Calu3 (cell line): ENCODE measurements at regions of chr7 and their contacts with region 1.

Region 1: GRCh38 chr7:43647673-43648472 is 65.0 kb downstream of the STK17A start:
- DNase-seq: peak; percentile 88
- H3K4me3 Mint-ChIP-seq: peak overlapping the region; percentile 38
- H3K27ac Mint-ChIP-seq: peak overlapping the region; percentile 90
- H3K4me1 Mint-ChIP-seq: peaks cover 53% of the 10 kb centered on the region
- H3K27me3 Mint-ChIP-seq: no peaks in the 10 kb centered on the region
- CTCF ChIP-seq: no peak

Region 2: GRCh38 chr7:43484678-43485395 is 163.0 kb before region 1 on chr7:
- CTCF ChIA-PET with region 1: no interaction called
- intact Hi-C with region 1: loop called (anchors 1 kb)
- DNase-seq: no peak
- H3K4me3 Mint-ChIP-seq: no peak overlapping the region
- H3K27ac Mint-ChIP-seq: peak overlapping the region; percentile 6
- H3K4me1 Mint-ChIP-seq: peaks cover 87% of the 10 kb centered on the region
- H3K27me3 Mint-ChIP-seq: no peaks in the 10 kb centered on the region
- CTCF ChIP-seq: no peak

Region 3: DNA sequence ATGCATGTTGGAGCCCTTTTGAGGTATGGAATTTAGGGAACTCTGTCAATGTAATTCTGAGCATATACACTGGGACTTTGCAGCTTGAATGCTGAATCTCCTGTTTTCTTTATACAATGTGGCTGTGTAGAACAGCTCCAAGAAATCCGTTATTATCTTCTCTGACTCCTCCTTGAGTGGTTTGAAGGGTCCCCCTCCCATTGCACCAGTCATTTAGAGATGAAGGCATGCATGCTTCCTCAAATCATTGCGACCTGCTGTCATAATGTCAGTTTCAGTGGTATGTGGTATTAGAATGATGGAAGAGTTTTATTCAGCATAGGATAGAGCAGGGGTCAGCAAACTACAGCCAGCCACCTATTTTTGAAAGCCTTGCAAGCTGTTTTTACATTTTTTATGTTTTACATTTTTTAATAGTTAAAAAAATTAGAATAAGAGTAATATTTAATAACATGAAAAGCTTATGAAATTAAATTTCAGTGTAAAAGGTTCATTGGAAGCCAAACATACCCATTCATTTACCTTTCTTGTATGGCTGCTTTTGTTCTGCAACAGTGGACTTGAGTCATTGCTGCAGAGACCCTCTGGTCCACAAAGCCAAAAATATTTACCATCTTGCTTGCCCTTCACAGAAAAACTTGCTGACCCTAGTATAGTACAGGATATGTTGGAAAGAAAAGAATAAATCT is 56.9 kb before region 1 on chr7:
- CTCF ChIA-PET with region 1: interaction called, 8 read pairs
- intact Hi-C with region 1: loop called (anchors 2 kb)
- DNase-seq: no peak
- H3K4me3 Mint-ChIP-seq: peak overlapping the region; percentile 52
- H3K27ac Mint-ChIP-seq: peak overlapping the region; percentile 96
- H3K4me1 Mint-ChIP-seq: peaks cover 70% of the 10 kb centered on the region
- H3K27me3 Mint-ChIP-seq: no peaks in the 10 kb centered on the region
- CTCF ChIP-seq: no peak

Region 4: DNA sequence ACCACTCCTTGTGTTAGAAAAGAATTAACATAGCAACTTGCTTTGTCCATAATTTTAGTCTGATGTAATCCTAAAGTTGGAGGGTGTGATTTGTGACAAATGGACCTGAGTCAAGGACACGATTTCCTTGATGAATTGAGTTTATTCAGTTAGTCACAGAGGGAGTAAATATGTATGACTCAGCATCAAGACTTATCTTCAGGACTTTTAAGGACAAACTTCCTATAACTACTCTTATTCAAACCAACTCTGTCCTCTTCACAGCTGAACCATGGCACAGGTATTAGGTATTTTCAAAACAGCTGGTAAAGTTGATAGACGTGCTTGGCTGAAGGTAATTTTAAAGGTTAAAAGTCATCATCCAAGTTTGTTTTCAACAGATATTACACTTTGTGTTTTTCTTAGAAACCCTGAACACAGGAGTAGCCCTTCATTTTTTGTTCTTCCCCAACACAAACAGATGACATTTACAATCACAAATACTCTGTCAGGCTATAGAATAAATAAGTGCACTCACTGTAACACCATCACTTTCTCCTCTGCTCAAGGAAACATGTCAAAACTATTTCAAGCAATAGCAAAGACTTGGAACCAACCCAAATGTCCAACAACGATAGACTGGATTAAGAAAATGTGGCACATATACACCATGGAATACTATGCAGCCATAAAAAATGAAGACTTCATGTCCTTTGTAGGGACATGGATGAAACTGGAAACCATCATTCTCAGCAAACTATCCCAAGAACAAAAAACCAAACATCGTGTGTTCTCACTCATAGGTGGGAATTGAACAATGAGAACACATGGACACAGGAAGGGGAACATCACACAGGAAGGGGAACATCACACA is 26.9 kb after region 1 on chr7:
- CTCF ChIA-PET with region 1: interaction called, 5 read pairs
- intact Hi-C with region 1: loop called (anchors 2 kb)
- DNase-seq: peak; percentile 40
- H3K4me3 Mint-ChIP-seq: peak overlapping the region; percentile 34
- H3K27ac Mint-ChIP-seq: peak overlapping the region; percentile 98
- H3K4me1 Mint-ChIP-seq: peaks cover 44% of the 10 kb centered on the region
- H3K27me3 Mint-ChIP-seq: no peaks in the 10 kb centered on the region
- CTCF ChIP-seq: no peak

Region 5: GRCh38 chr7:43700059-43700501 is 52.2 kb after region 1 on chr7:
- CTCF ChIA-PET with region 1: interaction called, 16 read pairs
- intact Hi-C with region 1: loop called (anchors 1 kb)
- DNase-seq: no peak
- H3K4me3 Mint-ChIP-seq: no peak overlapping the region
- H3K27ac Mint-ChIP-seq: no peak overlapping the region
- H3K4me1 Mint-ChIP-seq: no peaks in the 10 kb centered on the region
- H3K27me3 Mint-ChIP-seq: no peaks in the 10 kb centered on the region
- CTCF ChIP-seq: peak; percentile 75

Region 6: GRCh38 chr7:43834463-43835251 is 186.8 kb after region 1 on chr7:
- CTCF ChIA-PET with region 1: interaction called, 3 read pairs
- intact Hi-C with region 1: loop called (anchors 10 kb)
- DNase-seq: no peak
- H3K4me3 Mint-ChIP-seq: peak overlapping the region; percentile 15
- H3K27ac Mint-ChIP-seq: peak overlapping the region; percentile 40
- H3K4me1 Mint-ChIP-seq: peaks cover 27% of the 10 kb centered on the region
- H3K27me3 Mint-ChIP-seq: no peaks in the 10 kb centered on the region
- CTCF ChIP-seq: no peak